K562 (cell line): ENCODE measurements at regions of chr17 and their contacts with region 1.

Region 1: GRCh38 chr17:49680314-49680713 is 2.4 kb upstream of the SPOP start:
- DNase-seq: no peak
- ATAC-seq: no peak
- H3K4me3 ChIP-seq: no peak overlapping the region
- H3K27ac ChIP-seq: no peak overlapping the region; the same call in 2 of the 3 replicates
- H3K4me1 ChIP-seq: peaks cover 5 to 7% of the 10 kb centered on the region in 2 experiments; a peak in 4 of 5 replicates
- H3K27me3 ChIP-seq: peaks cover 6 to 19% of the 10 kb centered on the region in 2 experiments; a peak in 4 of 5 replicates
- CTCF ChIP-seq: no peak
- EP300 ChIP-seq: no peak
- POLR2A ChIP-seq: no peak
- RAD21 ChIP-seq: no peak

Region 2: DNA sequence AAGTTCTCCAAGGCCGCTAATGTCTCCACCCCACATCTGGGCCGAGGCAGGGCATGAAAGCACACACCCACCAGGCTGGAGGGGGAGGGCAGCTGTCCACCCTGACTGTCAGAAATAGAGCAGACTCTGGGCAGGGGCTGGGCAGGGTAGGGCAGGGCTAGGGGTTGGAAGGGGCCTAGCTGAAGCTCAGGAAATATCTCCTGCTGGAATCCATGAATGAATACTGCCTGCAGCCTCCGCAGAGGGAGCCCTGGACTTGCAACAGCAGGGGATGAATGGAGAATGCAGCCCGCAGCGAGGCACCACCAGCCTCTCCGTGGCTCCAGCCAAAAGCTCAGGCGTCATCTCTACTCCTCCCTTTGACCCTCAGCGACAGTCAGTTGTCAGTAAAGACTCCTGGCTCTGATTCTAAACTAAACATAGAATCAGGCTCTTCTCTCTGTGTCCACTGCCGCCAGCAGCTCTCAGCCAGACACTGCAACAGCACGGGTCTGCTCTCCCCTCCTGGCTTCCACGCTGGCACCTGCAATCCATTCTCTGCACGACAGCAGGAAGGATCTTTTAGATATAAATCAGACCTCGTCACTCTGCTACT is 209.1 kb before region 1 on chr17:
- CTCF ChIA-PET with region 1: no interaction called
- POLR2A ChIA-PET with region 1: no interaction called
- in situ Hi-C with region 1: no loop called
- intact Hi-C with region 1: no loop called
- DNase-seq: no peak
- ATAC-seq: no peak; the same call in 2 of the 3 replicates
- H3K4me3 ChIP-seq: no peak overlapping the region
- H3K27ac ChIP-seq: no peak overlapping the region
- H3K4me1 ChIP-seq: peaks cover 0 to 8% of the 10 kb centered on the region in 2 experiments; a peak in 1 of 5 replicates
- H3K27me3 ChIP-seq: peaks cover 18 to 57% of the 10 kb centered on the region in 2 experiments; a peak in 3 of 5 replicates
- CTCF ChIP-seq: no peak
- EP300 ChIP-seq: no peak
- POLR2A ChIP-seq: no peak
- RAD21 ChIP-seq: no peak

Region 3: DNA sequence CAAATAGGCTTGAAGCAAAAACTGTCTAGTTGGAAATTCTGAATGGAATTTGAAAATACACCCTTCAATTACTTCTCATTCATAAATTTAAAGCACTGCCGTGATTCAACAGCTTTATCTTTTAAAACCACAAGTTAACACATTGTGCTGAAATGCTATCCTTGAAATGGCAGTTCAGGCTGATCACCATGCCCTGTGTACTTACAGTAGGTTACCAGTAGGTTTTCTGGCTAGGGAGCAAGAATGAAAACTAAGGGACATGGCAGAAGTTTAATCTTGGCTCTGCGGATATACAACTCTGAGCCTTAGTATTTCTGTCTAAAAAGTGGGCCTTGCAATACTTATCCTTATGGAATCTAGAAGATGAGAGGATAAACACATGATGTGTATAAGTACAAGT is 76.6 kb before region 1 on chr17:
- CTCF ChIA-PET with region 1: no interaction called
- POLR2A ChIA-PET with region 1: no interaction called
- in situ Hi-C with region 1: no loop called
- intact Hi-C with region 1: no loop called
- DNase-seq: no peak
- ATAC-seq: no peak
- H3K4me3 ChIP-seq: no peak overlapping the region
- H3K27ac ChIP-seq: no peak overlapping the region
- H3K4me1 ChIP-seq: no peaks in the 10 kb centered on the region
- H3K27me3 ChIP-seq: no peaks in the 10 kb centered on the region
- CTCF ChIP-seq: no peak
- EP300 ChIP-seq: no peak
- POLR2A ChIP-seq: no peak
- RAD21 ChIP-seq: no peak

Region 4: DNA sequence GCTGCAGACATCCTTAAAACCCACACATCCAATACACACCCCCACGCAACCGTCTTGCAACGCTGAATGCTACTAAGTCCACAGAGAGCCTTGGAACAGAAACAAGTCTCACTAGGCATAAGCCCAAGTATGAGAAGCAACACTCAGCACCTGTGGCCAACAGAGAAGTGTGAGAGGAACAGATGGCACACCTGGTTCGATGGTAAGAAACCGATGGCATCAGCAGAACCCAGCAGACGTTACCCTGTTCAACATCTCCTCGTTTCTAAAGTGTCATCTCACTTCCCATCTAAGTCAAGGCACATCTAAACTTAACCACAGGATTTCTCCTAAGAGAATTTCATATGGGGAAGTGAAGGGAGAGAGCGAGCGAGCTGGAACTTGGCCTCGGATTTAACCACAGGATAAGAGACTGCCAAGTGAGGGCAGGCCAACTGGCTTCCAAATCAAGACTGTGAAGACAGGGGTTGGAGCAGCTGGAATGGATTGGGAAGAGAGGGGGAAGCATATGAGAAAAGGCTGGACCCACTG is 63.6 kb before region 1 on chr17:
- CTCF ChIA-PET with region 1: no interaction called
- POLR2A ChIA-PET with region 1: no interaction called
- in situ Hi-C with region 1: no loop called
- intact Hi-C with region 1: loop called (anchors 2 kb)
- DNase-seq: no peak
- ATAC-seq: no peak
- H3K4me3 ChIP-seq: no peak overlapping the region
- H3K27ac ChIP-seq: no peak overlapping the region; the same call in 2 of the 3 replicates
- H3K4me1 ChIP-seq: peaks cover 0 to 6% of the 10 kb centered on the region in 2 experiments; a peak in 1 of 5 replicates
- H3K27me3 ChIP-seq: no peaks in the 10 kb centered on the region
- CTCF ChIP-seq: no peak
- EP300 ChIP-seq: no peak
- POLR2A ChIP-seq: no peak
- RAD21 ChIP-seq: no peak